ENCODE measurements at regions of chr2 and their contacts with region 1.

Region 1: GRCh38 chr2:121356058-121356640 is 71.1 kb upstream of the TFCP2L1 start:
- DNase-seq: no peak
- H3K4me3 ChIP-seq: no peak overlapping the region
- H3K27ac ChIP-seq: no peak overlapping the region
- H3K27me3 ChIP-seq: no peaks in the 10 kb centered on the region
- CTCF ChIP-seq: peak; percentile 85

Region 2: GRCh38 chr2:121088251-121089165 is 267.6 kb before region 1 on chr2:
- CTCF ChIA-PET with region 1: interaction called, 102 read pairs
- POLR2A ChIA-PET with region 1: interaction called, 3 read pairs
- DNase-seq: no peak
- H3K4me3 ChIP-seq: no peak overlapping the region
- H3K27ac ChIP-seq: no peak overlapping the region
- H3K27me3 ChIP-seq: peaks cover 55% of the 10 kb centered on the region
- CTCF ChIP-seq: no peak

Region 3: DNA sequence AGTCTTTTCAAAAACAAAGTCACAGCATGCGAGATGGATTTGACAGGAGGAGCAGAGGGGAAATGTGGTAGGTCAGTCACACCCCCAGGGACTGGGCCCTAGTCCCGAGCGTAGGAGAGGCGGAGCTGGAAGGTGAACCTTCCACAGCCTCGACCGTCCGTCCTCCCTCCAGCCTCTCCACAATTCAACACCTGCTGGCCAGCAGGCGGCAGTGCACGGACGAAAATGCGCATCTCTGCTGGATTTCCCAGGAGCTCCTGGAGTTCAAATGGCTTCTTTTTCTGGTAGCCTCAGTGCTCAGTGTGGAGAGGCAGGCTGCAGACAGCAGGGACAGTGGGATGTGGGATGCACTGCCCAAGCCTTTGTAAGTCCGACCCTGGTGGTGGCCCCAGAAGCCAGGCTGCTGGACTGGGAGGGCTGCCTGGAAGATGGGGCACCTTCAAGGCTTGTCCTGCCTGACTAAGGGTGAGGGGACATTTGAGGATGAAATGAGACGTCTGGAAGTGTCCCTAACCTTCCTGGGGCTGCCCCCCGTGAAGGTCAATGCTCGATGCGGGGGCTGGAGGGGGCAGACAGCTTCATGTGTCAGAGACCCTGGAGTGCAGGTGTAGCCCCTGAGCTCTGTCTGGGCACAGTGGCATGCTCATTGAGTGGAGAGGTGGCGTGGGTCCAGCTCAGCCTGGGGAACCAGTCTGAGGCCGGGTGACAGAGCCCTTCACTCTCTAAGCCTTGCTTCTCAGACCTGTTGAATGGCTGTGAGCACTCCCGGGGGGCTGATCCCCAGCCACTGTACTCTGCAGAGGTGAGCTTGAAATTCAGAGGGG is 260.7 kb before region 1 on chr2:
- CTCF ChIA-PET with region 1: interaction called, 102 read pairs
- POLR2A ChIA-PET with region 1: no interaction called
- DNase-seq: no peak
- H3K4me3 ChIP-seq: no peak overlapping the region
- H3K27ac ChIP-seq: no peak overlapping the region
- H3K27me3 ChIP-seq: peaks cover 37% of the 10 kb centered on the region
- CTCF ChIP-seq: peak; percentile 80

Region 4: DNA sequence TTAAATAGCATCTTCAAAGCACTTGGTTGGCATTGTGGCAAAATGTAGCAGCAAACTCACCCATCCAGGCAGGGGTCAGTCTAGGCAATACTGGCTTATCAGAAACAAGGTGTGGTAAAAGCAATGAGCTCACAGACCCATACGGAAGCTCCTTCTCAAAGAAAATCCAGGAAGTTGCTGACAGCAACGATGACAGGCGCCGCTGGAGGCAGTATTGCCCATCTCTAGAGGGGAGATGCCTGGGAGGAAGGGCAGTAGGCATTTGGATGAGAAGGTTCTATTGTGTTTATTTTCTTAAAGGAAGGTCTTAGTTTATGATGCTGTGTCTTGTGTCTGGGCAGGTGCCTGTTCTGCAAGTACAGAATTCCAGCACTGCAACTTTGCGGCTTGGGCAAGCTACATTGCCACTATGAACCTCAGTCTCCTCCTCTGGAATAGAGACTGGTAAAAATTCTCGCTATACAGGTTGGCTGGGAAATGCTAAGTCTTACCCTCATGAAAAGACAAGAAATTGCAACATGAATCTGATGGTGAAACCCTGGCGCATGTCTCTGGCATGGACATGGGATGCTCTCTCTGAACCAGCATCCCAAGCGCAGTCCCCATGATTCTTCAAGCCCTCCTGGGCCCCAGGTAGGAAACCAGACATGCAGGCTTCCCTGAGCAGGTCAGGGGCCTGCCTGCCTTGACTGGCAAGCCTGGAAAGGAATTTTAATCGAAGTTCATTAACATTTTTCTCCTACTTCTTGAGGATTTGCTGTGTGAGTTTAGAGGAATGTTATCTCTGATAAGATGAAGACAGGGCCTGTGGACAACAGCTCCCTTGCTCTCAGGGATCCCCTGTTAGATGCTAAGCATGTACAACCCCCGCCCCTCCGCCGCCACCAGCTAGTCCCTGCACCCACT is 227.1 kb before region 1 on chr2:
- CTCF ChIA-PET with region 1: interaction called, 11 read pairs
- POLR2A ChIA-PET with region 1: no interaction called
- DNase-seq: no peak
- H3K4me3 ChIP-seq: no peak overlapping the region
- H3K27ac ChIP-seq: no peak overlapping the region
- H3K27me3 ChIP-seq: peaks cover 15% of the 10 kb centered on the region
- CTCF ChIP-seq: peak; percentile 56

Region 5: DNA sequence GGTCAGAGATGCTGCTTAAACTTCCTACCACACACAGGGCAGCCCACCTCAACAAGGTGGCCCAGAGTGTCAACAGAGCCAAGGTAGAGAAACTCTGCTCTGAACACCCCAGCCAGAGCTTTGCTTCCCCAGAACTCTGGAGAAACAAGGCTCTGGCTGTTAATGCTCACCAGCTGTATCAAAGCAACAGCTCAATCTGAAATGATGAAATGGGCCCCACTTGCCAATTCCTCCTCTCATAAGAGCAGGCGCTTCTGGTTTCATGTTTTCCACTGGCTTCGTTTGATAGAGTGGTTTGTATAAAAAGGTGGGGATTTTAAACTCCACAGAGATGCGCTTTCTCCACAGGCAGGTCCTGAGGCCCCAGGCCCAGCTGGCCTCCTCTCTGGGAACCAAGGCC is 10.3 kb before region 1 on chr2:
- CTCF ChIA-PET with region 1: interaction called, 35 read pairs
- POLR2A ChIA-PET with region 1: no interaction called
- DNase-seq: no peak
- H3K4me3 ChIP-seq: no peak overlapping the region
- H3K27ac ChIP-seq: no peak overlapping the region
- H3K27me3 ChIP-seq: no peaks in the 10 kb centered on the region
- CTCF ChIP-seq: no peak

Region 6: DNA sequence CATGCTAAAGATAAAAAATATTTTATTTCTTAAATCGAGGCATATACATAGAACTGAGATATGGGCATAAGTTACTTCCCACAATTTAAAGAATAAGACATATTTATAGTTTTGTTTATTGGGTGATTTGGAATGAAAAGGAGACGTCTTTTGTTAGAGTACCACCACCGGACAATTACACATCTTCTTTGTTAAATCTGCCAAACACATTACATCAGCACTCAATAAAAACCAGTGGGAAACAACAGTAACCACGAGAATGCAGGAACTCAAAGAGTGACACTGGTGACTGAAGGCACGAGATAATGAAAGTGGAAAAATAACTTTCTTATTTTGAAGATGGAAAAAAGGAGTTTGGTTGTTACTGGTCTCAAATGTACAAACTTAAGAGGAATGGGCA is 21.5 kb after region 1 on chr2:
- CTCF ChIA-PET with region 1: interaction called, 15 read pairs
- POLR2A ChIA-PET with region 1: no interaction called
- DNase-seq: no peak
- H3K4me3 ChIP-seq: no peak overlapping the region
- H3K27ac ChIP-seq: no peak overlapping the region
- H3K27me3 ChIP-seq: no peaks in the 10 kb centered on the region
- CTCF ChIP-seq: no peak